Calu3 (cell line): ENCODE measurements at regions of chr5 and their contacts with region 1.

Region 1: GRCh38 chr5:138337685-138338410 is at the start of gene FAM53C:
- DNase-seq: peak; percentile 97
- H3K4me3 Mint-ChIP-seq: peak within 1 kb of the TSS; percentile 87
- H3K27ac Mint-ChIP-seq: peak within 1 kb of the TSS; percentile 99
- H3K4me1 Mint-ChIP-seq: peaks cover 10% of the 10 kb centered on the region
- H3K27me3 Mint-ChIP-seq: no peaks in the 10 kb centered on the region
- CTCF ChIP-seq: no peak
- total RNA-seq, gene FAM53C: 36.1 and 38.5 TPM in 2 replicates

Region 2: GRCh38 chr5:138223532-138223931 is 114.3 kb before region 1 on chr5:
- CTCF ChIA-PET with region 1: no interaction called
- intact Hi-C with region 1: loop called (anchors 5 kb)
- DNase-seq: no peak
- H3K4me3 Mint-ChIP-seq: no peak overlapping the region
- H3K27ac Mint-ChIP-seq: no peak overlapping the region
- H3K4me1 Mint-ChIP-seq: peaks cover 8% of the 10 kb centered on the region
- H3K27me3 Mint-ChIP-seq: no peaks in the 10 kb centered on the region
- CTCF ChIP-seq: no peak

Region 3: GRCh38 chr5:138663009-138663408 is 325.2 kb after region 1 on chr5:
- CTCF ChIA-PET with region 1: no interaction called
- intact Hi-C with region 1: no loop called
- DNase-seq: no peak
- H3K4me3 Mint-ChIP-seq: no peak overlapping the region
- H3K27ac Mint-ChIP-seq: no peak overlapping the region
- H3K4me1 Mint-ChIP-seq: peaks cover 27% of the 10 kb centered on the region
- H3K27me3 Mint-ChIP-seq: peaks cover 9% of the 10 kb centered on the region
- CTCF ChIP-seq: no peak